Panc1 (cell line): ENCODE measurements at regions of chr6 and their contacts with region 1.

Region 1: GRCh38 chr6:48782230-48782629 is 671.2 kb upstream of the PTCHD4 start:
- DNase-seq: no peak
- ATAC-seq: no peak
- H3K4me3 ChIP-seq: no peak overlapping the region
- H3K27ac ChIP-seq: no peak overlapping the region
- H3K4me1 ChIP-seq: no peaks in the 10 kb centered on the region
- H3K27me3 ChIP-seq: no peaks in the 10 kb centered on the region
- CTCF ChIP-seq: no peak

Region 2: GRCh38 chr6:48826901-48827701 is 44.9 kb after region 1 on chr6:
- CTCF ChIA-PET with region 1: interaction called, 16 read pairs
- POLR2A ChIA-PET with region 1: no interaction called
- in situ Hi-C with region 1: no loop called
- intact Hi-C with region 1: no loop called
- DNase-seq: peak; percentile 92
- ATAC-seq: peak; percentile 96
- H3K4me3 ChIP-seq: no peak overlapping the region
- H3K27ac ChIP-seq: peak overlapping the region; percentile 68
- H3K4me1 ChIP-seq: no peaks in the 10 kb centered on the region
- H3K27me3 ChIP-seq: no peaks in the 10 kb centered on the region
- CTCF ChIP-seq: no peak